ENCODE measurements at regions of chr1 and their contacts with region 1.

Region 1: GRCh38 chr1:2468041-2468472 is 8.0 kb upstream of the PLCH2 start:
- DNase-seq: peak; percentile 65
- H3K4me3 ChIP-seq: peak overlapping the region in 1 of 2 experiments; percentile 43; a peak in 1 of 4 replicates
- H3K27ac ChIP-seq: no peak overlapping the region; a peak in 1 of 4 replicates
- H3K4me1 ChIP-seq: peaks cover 0 to 76% of the 10 kb centered on the region in 2 experiments; a peak in 1 of 4 replicates
- H3K27me3 ChIP-seq: no peaks in the 10 kb centered on the region
- CTCF ChIP-seq: no peak
- EP300 ChIP-seq: no peak
- RAD21 ChIP-seq: no peak

Region 2: GRCh38 chr1:2391041-2391930 is 76.8 kb before region 1 on chr1 and contains the starts of genes MORN1 and RER1:
- CTCF ChIA-PET with region 1: no interaction called
- POLR2A ChIA-PET with region 1: no interaction called
- DNase-seq: peak; percentile 99
- H3K4me3 ChIP-seq: peak within 1 kb of the TSS; percentile 88 to 97
- H3K27ac ChIP-seq: peak within 1 kb of the TSS; percentile 56 to 76; a peak in 3 of 4 replicates
- H3K4me1 ChIP-seq: peaks cover 0 to 24% of the 10 kb centered on the region in 2 experiments; a peak in 2 of 4 replicates
- H3K27me3 ChIP-seq: no peaks in the 10 kb centered on the region
- CTCF ChIP-seq: no peak
- EP300 ChIP-seq: no peak; a peak in 1 of 4 replicates
- RAD21 ChIP-seq: no peak
- polyA plus RNA-seq, gene MORN1: 13.7 and 16.3 TPM in 2 replicates
- polyA plus RNA-seq, gene RER1: 181 and 189 TPM in 2 replicates

Region 3: GRCh38 chr1:2480986-2481364 is 12.9 kb after region 1 on chr1:
- CTCF ChIA-PET with region 1: interaction called, 17 read pairs
- POLR2A ChIA-PET with region 1: interaction called, 19 read pairs
- DNase-seq: peak; percentile 88
- H3K4me3 ChIP-seq: no peak overlapping the region
- H3K27ac ChIP-seq: peak overlapping the region in 1 of 2 experiments; percentile 96; a peak in 2 of 4 replicates
- H3K4me1 ChIP-seq: peaks cover 0 to 76% of the 10 kb centered on the region in 2 experiments; a peak in 1 of 4 replicates
- H3K27me3 ChIP-seq: no peaks in the 10 kb centered on the region
- CTCF ChIP-seq: no peak
- EP300 ChIP-seq: 0 out of 4 replicates have a peak, but pooled peaks of 1 of the 2 experiments have one; percentile 15
- RAD21 ChIP-seq: no peak